Activated CD8-positive, alpha-beta T cell treated with anti-CD3 and anti-CD28 coated beads for 36 hours (primary cell): ENCODE measurements at regions of chr10 and their contacts with region 1.

Region 1: DNA sequence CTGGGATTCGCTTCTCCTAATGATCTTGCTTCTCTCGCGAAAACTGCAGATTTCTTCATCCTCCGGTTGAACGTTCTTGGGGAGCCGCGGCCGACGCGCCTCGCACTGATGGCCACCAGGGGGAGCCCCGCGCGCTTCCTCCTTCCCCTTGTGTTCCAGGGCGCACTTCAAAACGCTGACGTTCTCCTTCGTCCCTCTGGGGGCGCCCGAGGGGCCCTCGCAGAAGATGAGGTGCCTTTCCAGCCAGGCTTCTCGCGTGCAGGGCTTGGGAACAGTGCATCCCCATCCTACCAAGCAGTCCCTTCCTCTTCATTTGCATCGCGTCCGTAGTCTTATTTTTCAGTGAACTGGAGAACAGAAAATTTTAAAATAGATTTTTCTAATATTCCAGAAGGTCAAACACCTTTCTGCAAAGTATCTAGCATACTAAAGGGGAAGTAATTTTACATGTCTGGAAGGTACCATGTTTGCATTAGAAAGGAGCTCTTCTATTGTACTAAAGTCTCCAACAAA is 22.5 kb downstream of the GSTO2 start:
- DNase-seq: peak; percentile 94
- ATAC-seq: peak; percentile 100
- H3K4me3 Mint-ChIP-seq: no peak overlapping the region
- H3K27ac Mint-ChIP-seq: no peak overlapping the region
- H3K4me1 Mint-ChIP-seq: peaks cover 9% of the 10 kb centered on the region
- H3K27me3 Mint-ChIP-seq: peaks cover 12% of the 10 kb centered on the region
- CTCF ChIP-seq: peak; percentile 99

Region 2: GRCh38 chr10:104231784-104232612 is 59.5 kb before region 1 on chr10 and contains the start of gene CFAP43:
- CTCF ChIA-PET with region 1: no interaction called
- POLR2A ChIA-PET with region 1: no interaction called
- intact Hi-C with region 1: no loop called
- DNase-seq: peak; percentile 99
- ATAC-seq: peak; percentile 100
- H3K4me3 Mint-ChIP-seq: peak within 1 kb of the TSS; percentile 80
- H3K27ac Mint-ChIP-seq: no peak within 1 kb of the TSS
- H3K4me1 Mint-ChIP-seq: peaks cover 7% of the 10 kb centered on the region
- H3K27me3 Mint-ChIP-seq: peaks cover 12% of the 10 kb centered on the region
- CTCF ChIP-seq: no peak
- total RNA-seq, gene CFAP43: 0.16 TPM in 1 of 2 experiments, not detected in the other

Region 3: GRCh38 chr10:104268716-104269645 is 22.5 kb before region 1 on chr10 and contains the start of gene GSTO2:
- CTCF ChIA-PET with region 1: interaction called, 239 read pairs
- POLR2A ChIA-PET with region 1: interaction called, 3 read pairs
- intact Hi-C with region 1: no loop called
- DNase-seq: peak; percentile 100
- ATAC-seq: peak; percentile 91
- H3K4me3 Mint-ChIP-seq: peak within 1 kb of the TSS; percentile 93
- H3K27ac Mint-ChIP-seq: peak within 1 kb of the TSS; percentile 98
- H3K4me1 Mint-ChIP-seq: peaks cover 40% of the 10 kb centered on the region
- H3K27me3 Mint-ChIP-seq: no peaks in the 10 kb centered on the region
- CTCF ChIP-seq: no peak
- total RNA-seq, gene GSTO2: 1.8 to 2.7 TPM

Region 4: DNA sequence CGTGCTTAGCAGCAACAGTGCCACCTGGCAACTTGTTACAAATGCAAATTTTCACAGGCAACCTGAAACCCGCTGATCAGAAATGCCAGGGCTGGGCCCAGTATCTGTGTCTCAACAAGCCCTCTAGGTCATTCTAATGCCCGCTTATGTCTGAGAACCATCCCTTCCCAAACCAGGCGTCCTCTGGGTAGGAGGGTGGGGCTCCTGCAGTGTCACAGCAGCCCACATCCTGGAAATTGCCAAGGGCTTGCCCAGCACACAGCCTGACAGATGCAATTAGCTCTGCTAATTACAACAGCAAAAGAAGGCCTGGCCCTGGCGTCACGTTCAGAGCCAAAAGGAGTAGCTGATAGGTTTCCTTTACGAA is 30.9 kb after region 1 on chr10:
- CTCF ChIA-PET with region 1: interaction called, 19 read pairs
- POLR2A ChIA-PET with region 1: no interaction called
- intact Hi-C with region 1: no loop called
- DNase-seq: peak; percentile 69
- ATAC-seq: peak; percentile 66
- H3K4me3 Mint-ChIP-seq: peak overlapping the region; percentile 16
- H3K27ac Mint-ChIP-seq: peak overlapping the region; percentile 82
- H3K4me1 Mint-ChIP-seq: peaks cover 88% of the 10 kb centered on the region
- H3K27me3 Mint-ChIP-seq: no peaks in the 10 kb centered on the region
- CTCF ChIP-seq: no peak

Region 5: GRCh38 chr10:104337974-104338735 is 46.7 kb after region 1 on chr10 and contains the start of gene ITPRIP:
- CTCF ChIA-PET with region 1: interaction called, 21 read pairs
- POLR2A ChIA-PET with region 1: interaction called, 3 read pairs
- intact Hi-C with region 1: no loop called
- DNase-seq: peak; percentile 84
- ATAC-seq: peak; percentile 76
- H3K4me3 Mint-ChIP-seq: peak within 1 kb of the TSS; percentile 86
- H3K27ac Mint-ChIP-seq: peak within 1 kb of the TSS; percentile 100
- H3K4me1 Mint-ChIP-seq: peaks cover 45% of the 10 kb centered on the region
- H3K27me3 Mint-ChIP-seq: no peaks in the 10 kb centered on the region
- CTCF ChIP-seq: no peak
- total RNA-seq, gene ITPRIP: 18.3 to 18.9 TPM

Region 6: GRCh38 chr10:104368381-104368780 is 76.9 kb after region 1 on chr10:
- CTCF ChIA-PET with region 1: interaction called, 11 read pairs
- POLR2A ChIA-PET with region 1: interaction called, 3 read pairs
- intact Hi-C with region 1: no loop called
- DNase-seq: no peak
- ATAC-seq: no peak
- H3K4me3 Mint-ChIP-seq: no peak overlapping the region
- H3K27ac Mint-ChIP-seq: no peak overlapping the region
- H3K4me1 Mint-ChIP-seq: no peaks in the 10 kb centered on the region
- H3K27me3 Mint-ChIP-seq: peaks cover 10% of the 10 kb centered on the region
- CTCF ChIP-seq: no peak